ENCODE measurements at regions of chr5 and their contacts with region 1.

Region 1: GRCh38 chr5:142426129-142427014 is 101.6 kb upstream of the SPRY4 start:
- DNase-seq: no peak

Region 2: DNA sequence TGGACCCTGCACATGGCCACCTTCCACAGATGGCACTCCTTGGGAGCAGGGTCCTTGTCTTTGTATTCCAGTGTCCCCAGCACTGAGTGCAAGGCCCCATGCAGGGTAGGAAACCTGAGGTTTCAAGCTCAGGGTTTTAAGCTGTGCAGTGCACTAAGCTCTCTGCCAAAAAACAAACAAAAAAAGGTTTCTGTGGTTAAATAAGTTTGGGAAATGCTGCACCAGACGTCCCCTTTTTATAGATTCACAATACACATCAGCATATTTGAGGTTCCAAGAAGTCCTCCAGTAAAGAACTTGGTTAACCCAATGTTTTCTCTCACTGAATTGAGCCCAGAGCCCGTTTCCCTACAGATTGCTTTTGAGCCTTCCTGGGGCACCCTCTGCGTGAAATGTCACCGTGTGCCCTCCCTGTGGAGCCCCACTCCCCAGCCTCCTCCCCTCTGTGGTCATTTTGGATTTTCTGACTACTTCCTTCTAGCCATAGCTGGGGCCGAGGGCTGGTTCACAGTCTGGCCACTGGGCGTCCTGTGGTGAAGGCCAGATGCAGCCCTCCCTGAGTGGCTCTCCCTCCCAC is 485.6 kb before region 1 on chr5:
- intact Hi-C with region 1: no loop called
- DNase-seq: no peak

Region 3: GRCh38 chr5:142186857-142187594 is 239.3 kb before region 1 on chr5:
- intact Hi-C with region 1: no loop called
- DNase-seq: no peak

Region 4: DNA sequence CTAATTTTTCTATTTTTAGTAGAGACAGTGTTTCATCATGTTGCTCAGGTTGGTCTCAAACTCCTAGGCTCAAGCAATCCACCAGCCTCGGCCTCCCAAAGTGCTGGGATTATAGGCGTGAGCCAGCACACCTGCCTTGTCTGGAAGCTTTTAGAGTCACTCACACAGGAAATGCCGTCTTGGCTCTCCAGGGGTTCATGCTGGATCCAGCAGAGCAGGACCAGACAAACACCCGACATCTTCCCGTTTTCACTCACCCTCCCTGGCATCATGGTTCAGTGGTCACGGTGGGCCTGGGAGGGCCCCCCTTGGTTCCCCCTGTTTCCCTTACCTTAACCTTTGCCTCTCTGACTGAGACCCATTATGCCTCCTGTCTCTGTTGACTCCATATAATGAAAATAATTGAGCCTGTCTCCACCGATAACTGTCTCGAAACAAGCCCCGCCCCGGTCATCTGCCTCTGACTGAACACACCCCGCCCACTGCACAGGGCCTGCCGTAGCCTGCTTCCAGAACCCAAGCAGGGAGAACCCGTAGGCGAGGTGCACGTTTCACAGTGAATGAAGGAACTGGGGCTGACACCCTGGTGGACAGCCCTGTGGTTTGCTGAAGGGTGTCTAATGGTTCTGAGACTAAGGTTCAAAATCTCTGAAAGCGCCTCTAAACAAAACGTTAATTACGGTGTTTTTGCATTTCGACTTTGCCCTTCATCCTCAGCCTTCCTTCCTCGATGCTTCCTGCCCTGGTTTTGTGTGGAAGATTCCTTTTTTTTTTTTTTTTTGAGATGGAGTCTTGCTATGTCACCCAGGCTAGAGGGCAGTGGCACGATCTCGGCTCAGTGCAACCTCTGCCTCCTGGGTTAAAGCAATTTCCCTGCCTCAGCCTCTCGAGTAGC is 61.9 kb before region 1 on chr5:
- intact Hi-C with region 1: loop called (anchors 5 kb)
- DNase-seq: peak; percentile 82

Region 5: GRCh38 chr5:142472300-142472951 is 46.1 kb after region 1 on chr5:
- intact Hi-C with region 1: no loop called
- DNase-seq: no peak

Measured in cardiac septum (tissue), 1 donor.